K562 (cell line): ENCODE measurements at regions of chr12 and their contacts with region 1.

Region 1: DNA sequence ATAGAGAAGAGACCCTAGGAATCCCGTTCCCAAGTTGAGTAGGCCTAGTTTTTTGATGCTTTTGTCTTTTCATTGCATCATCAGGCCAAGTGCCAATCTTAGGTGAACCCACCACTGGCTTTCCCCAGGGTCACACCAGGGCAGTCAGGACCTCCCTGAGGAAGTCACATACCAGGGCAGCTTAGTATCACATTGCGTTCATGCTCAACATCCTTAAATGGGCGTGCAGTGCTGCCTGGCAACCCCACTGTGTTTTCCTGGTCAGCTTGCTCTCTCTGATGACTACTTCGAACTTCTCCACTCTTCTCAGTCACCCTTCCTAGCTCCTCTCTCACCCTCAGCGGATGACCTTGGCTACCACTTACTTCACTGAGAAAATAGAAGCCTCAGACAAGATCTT is 9.0 kb downstream of the ASIC1 start:
- DNase-seq: no peak
- ATAC-seq: no peak
- H3K4me3 ChIP-seq: no peak overlapping the region
- H3K27ac ChIP-seq: no peak overlapping the region
- H3K4me1 ChIP-seq: peaks cover 9 to 10% of the 10 kb centered on the region in 2 experiments; a peak in 3 of 5 replicates
- H3K27me3 ChIP-seq: peaks cover 3 to 46% of the 10 kb centered on the region in 2 experiments; a peak in 4 of 5 replicates
- CTCF ChIP-seq: no peak
- EP300 ChIP-seq: no peak
- POLR2A ChIP-seq: no peak
- RAD21 ChIP-seq: no peak

Region 2: GRCh38 chr12:49920241-49920921 is 146.1 kb before region 1 on chr12:
- CTCF ChIA-PET with region 1: no interaction called
- POLR2A ChIA-PET with region 1: no interaction called
- in situ Hi-C with region 1: no loop called
- intact Hi-C with region 1: no loop called
- DNase-seq: no peak
- ATAC-seq: peak; percentile 53; the same call in 2 of the 3 replicates
- H3K4me3 ChIP-seq: no peak overlapping the region
- H3K27ac ChIP-seq: no peak overlapping the region
- H3K4me1 ChIP-seq: no peaks in the 10 kb centered on the region
- H3K27me3 ChIP-seq: peaks cover 5 to 43% of the 10 kb centered on the region in 2 experiments
- CTCF ChIP-seq: no peak
- EP300 ChIP-seq: no peak
- POLR2A ChIP-seq: no peak
- RAD21 ChIP-seq: no peak

Region 3: GRCh38 chr12:49974231-49974675 is 92.2 kb before region 1 on chr12:
- CTCF ChIA-PET with region 1: interaction called, 43 read pairs
- POLR2A ChIA-PET with region 1: interaction called, 3 read pairs
- in situ Hi-C with region 1: loop called (anchors 5 kb)
- intact Hi-C with region 1: no loop called
- DNase-seq: peak; percentile 60 to 70 (median 64)
- ATAC-seq: peak; percentile 94
- H3K4me3 ChIP-seq: no peak overlapping the region
- H3K27ac ChIP-seq: no peak overlapping the region
- H3K4me1 ChIP-seq: peaks cover 0 to 31% of the 10 kb centered on the region in 2 experiments; a peak in 2 of 5 replicates
- H3K27me3 ChIP-seq: peaks cover 21 to 50% of the 10 kb centered on the region in 2 experiments; a peak in 4 of 5 replicates
- CTCF ChIP-seq: peak; percentile 71 to 77 (median 72)
- EP300 ChIP-seq: no peak
- POLR2A ChIP-seq: no peak
- RAD21 ChIP-seq: peak; percentile 58 to 79